CD14-positive monocyte (primary cell): ENCODE measurements at regions of chr4 and their contacts with region 1.

Region 1: GRCh38 chr4:82823062-82823461 is 24.5 kb upstream of the SCD5 start:
- DNase-seq: no peak
- H3K4me3 ChIP-seq: no peak overlapping the region
- H3K4me3 Mint-ChIP-seq: no peak overlapping the region
- H3K27ac ChIP-seq: no peak overlapping the region
- H3K27ac Mint-ChIP-seq: no peak overlapping the region
- H3K4me1 ChIP-seq: no peaks in the 10 kb centered on the region
- H3K4me1 Mint-ChIP-seq: no peaks in the 10 kb centered on the region
- H3K27me3 ChIP-seq: no peaks in the 10 kb centered on the region
- H3K27me3 Mint-ChIP-seq: peaks cover 0 to 1% (median 0%) of the 10 kb centered on the region in 3 donors
- CTCF ChIP-seq: no peak

Region 2: GRCh38 chr4:82661181-82661992 is 161.7 kb before region 1 on chr4:
- intact Hi-C with region 1: no loop called
- DNase-seq: no peak
- H3K4me3 ChIP-seq: no peak overlapping the region
- H3K4me3 Mint-ChIP-seq: no peak overlapping the region
- H3K27ac ChIP-seq: no peak overlapping the region
- H3K27ac Mint-ChIP-seq: no peak overlapping the region
- H3K4me1 ChIP-seq: no peaks in the 10 kb centered on the region
- H3K4me1 Mint-ChIP-seq: no peaks in the 10 kb centered on the region
- H3K27me3 ChIP-seq: no peaks in the 10 kb centered on the region
- H3K27me3 Mint-ChIP-seq: peaks cover 0 to 5% (median 1%) of the 10 kb centered on the region in 3 donors
- CTCF ChIP-seq: no peak

Region 3: DNA sequence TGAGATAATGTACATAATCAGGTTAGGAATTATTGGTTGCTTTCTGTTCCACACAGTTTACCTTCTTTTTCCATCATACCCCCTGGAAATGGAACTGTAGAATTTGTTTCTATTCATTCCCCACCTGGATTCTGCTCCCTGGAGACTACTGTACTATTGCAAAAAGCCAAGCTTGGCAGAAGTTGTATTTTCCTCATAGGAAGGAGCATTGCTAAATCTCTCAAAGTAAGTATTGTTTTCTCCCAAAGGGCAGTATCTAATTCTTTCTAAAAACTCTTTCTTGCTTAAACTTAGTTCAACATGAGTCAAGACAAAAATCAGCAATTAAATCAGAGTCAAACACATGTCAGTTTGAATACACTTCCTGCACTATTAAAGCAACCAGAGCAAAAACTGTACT is 1896.1 kb after region 1 on chr4:
- intact Hi-C with region 1: loop called in 1 of 2 experiments (anchors 10 kb)
- DNase-seq: no peak
- H3K4me3 ChIP-seq: no peak overlapping the region
- H3K4me3 Mint-ChIP-seq: no peak overlapping the region
- H3K27ac ChIP-seq: no peak overlapping the region
- H3K27ac Mint-ChIP-seq: no peak overlapping the region
- H3K4me1 ChIP-seq: no peaks in the 10 kb centered on the region
- H3K4me1 Mint-ChIP-seq: no peaks in the 10 kb centered on the region
- H3K27me3 ChIP-seq: no peaks in the 10 kb centered on the region
- H3K27me3 Mint-ChIP-seq: no peaks in the 10 kb centered on the region
- CTCF ChIP-seq: no peak